ENCODE measurements at regions of chr2 and their contacts with region 1.

Region 1: DNA sequence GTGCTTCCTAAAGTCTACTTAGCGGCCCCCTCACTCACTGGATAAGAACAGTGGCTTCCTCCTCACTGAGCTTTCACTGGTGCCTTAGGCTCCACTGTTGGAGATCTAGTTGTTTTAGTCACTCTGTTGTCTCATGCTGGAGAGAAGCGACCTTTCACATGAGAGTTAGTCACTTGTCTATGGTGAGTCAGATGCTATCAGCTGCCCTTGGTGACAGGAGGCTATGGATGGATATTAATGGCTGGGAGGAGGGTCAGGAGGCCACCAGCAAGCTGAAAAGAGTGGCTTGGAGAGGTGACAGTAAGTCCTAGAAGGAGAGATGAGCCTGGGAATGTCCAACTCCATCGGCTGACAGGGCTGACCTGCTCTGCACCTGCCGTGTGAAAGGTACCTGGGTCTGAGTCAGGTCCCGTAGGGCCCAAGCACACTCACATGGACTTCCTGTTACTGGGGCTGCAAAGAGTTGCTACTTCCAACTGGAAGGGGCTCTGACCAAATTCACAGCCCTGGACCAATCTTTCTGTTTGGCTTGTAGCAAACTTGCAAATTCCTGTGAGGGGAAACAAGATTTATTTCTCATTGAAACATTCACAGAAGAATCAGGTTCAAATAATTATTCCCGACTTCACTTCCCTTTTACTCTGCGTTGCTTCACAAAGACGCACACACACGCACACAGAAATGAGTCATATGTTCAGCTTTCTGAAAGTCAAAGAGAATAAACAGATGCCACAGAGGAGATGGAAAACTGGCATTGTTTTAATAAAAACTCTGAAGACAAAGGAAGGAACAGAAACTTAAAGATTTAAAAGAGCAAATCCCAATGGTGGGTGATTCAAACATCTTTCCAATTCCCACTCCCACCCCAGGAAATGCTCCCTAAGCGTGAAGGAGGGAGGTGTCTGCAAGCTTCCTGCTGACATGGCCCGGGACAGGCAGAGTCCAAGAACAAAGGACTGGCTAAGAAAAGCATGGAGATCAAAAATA is 203.5 kb upstream of the TWIST2 start:
- ATAC-seq: peak in 7 of 8 experiments; percentile 93 to 96 (median 94)
- H3K4me3 ChIP-seq: no peak overlapping the region
- H3K27ac ChIP-seq: peak overlapping the region in 1 of 2 donors; percentile 72
- H3K4me1 ChIP-seq: peaks cover 13 to 15% of the 10 kb centered on the region in 2 donors

Region 2: GRCh38 chr2:238528953-238529781 is 115.2 kb before region 1 on chr2:
- in situ Hi-C with region 1: loop called in 1 of 9 experiments (anchors 25 kb)
- ATAC-seq: peak in 5 of 8 experiments; percentile 33 to 93 (median 69)
- H3K4me3 ChIP-seq: no peak overlapping the region
- H3K27ac ChIP-seq: no peak overlapping the region
- H3K4me1 ChIP-seq: no peaks in the 10 kb centered on the region